Aorta (tissue), 5 donors: ENCODE measurements at regions of chr10 and their contacts with region 1.

Region 1: GRCh38 chr10:47176903-47177868 is 122.8 kb upstream of the GDF10 start:
- DNase-seq: no peak
- ATAC-seq: no peak
- H3K4me3 ChIP-seq: no peak overlapping the region
- H3K27ac ChIP-seq: no peak overlapping the region
- H3K4me1 ChIP-seq: no peaks in the 10 kb centered on the region
- H3K27me3 ChIP-seq: no peaks in the 10 kb centered on the region

Region 2: GRCh38 chr10:47047671-47048525 is 129.3 kb before region 1 on chr10:
- intact Hi-C with region 1: loop called in 1 of 2 experiments (anchors 5 kb)
- DNase-seq: peak; percentile 87 to 95
- ATAC-seq: peak; percentile 75
- H3K4me3 ChIP-seq: no peak overlapping the region
- H3K27ac ChIP-seq: no peak overlapping the region
- H3K4me1 ChIP-seq: peaks cover 0 to 2% of the 10 kb centered on the region in 2 donors
- H3K27me3 ChIP-seq: no peaks in the 10 kb centered on the region

Region 3: DNA sequence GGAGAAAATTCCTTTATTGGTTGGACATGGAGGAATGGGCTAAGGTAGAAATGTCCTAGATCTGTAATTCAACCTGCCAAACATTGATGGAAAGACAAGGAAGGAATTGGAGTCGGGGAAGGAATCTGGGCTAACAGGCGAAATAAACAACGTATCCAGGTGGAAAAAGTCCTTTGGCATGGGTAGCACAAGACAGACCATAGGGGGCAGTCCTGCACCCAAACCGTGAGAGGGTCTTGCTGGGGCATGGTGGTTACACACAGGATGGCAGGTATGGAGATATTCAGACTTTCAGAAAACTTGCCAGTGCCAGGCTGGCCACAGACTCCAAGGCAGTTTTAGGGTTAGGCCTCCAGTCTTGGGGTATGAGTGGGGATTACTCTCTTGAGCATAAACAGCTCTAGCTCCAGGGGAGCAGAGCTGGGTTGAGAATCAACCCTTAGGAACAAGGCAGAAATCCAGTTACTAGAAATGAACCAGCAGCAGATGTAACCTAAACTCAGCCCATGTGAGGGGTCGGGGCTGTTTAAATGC is 65.8 kb before region 1 on chr10:
- intact Hi-C with region 1: no loop called
- DNase-seq: no peak
- ATAC-seq: no peak
- H3K4me3 ChIP-seq: no peak overlapping the region
- H3K27ac ChIP-seq: no peak overlapping the region
- H3K4me1 ChIP-seq: peaks cover 3 to 4% of the 10 kb centered on the region in 2 donors
- H3K27me3 ChIP-seq: no peaks in the 10 kb centered on the region

Region 4: GRCh38 chr10:47233631-47234030 is 56.4 kb after region 1 on chr10:
- intact Hi-C with region 1: no loop called
- DNase-seq: no peak
- ATAC-seq: no peak
- H3K4me3 ChIP-seq: no peak overlapping the region
- H3K27ac ChIP-seq: no peak overlapping the region
- H3K4me1 ChIP-seq: peaks cover 0 to 9% of the 10 kb centered on the region in 2 donors
- H3K27me3 ChIP-seq: no peaks in the 10 kb centered on the region

Region 5: DNA sequence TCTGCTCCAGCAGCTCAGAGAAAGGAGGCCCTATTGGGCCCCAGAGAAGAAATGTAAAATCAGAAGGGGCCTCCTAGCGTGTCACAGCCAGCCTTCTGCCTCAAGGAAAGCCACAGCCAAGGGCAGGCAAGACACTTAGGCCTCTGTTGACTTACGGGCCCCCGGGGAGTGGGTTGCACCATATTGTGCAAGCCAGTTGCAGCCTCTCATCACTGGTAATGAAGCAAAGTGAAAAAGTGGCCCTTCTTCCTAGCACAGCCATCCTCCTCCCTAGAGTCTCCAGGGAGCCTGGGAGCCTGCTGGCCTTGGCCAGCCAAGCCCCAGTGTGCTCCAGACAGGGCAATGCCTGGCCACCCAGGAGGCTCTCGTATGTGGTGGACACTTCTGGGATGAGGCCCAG is 66.6 kb after region 1 on chr10:
- intact Hi-C with region 1: loop called in 1 of 2 experiments (anchors 5 kb)
- DNase-seq: peak; percentile 53 to 85
- ATAC-seq: peak; percentile 79
- H3K4me3 ChIP-seq: no peak overlapping the region
- H3K27ac ChIP-seq: no peak overlapping the region
- H3K4me1 ChIP-seq: no peaks in the 10 kb centered on the region
- H3K27me3 ChIP-seq: no peaks in the 10 kb centered on the region